ENCODE measurements at regions of chr6 and their contacts with region 1.

Region 1: GRCh38 chr6:80004173-80005072 is at the start of gene TTK:
- DNase-seq: peak; percentile 90
- H3K4me3 ChIP-seq: peak within 1 kb of the TSS; percentile 97 to 98 (median 97)
- H3K27ac ChIP-seq: peak within 1 kb of the TSS; percentile 66
- H3K4me1 ChIP-seq: peaks cover 9% of the 10 kb centered on the region
- H3K27me3 ChIP-seq: no peaks in the 10 kb centered on the region
- CTCF ChIP-seq: no peak
- POLR2A ChIP-seq: peak; percentile 69
- total RNA-seq, gene TTK: 23.6 and 29.4 TPM in 2 replicates

Region 2: DNA sequence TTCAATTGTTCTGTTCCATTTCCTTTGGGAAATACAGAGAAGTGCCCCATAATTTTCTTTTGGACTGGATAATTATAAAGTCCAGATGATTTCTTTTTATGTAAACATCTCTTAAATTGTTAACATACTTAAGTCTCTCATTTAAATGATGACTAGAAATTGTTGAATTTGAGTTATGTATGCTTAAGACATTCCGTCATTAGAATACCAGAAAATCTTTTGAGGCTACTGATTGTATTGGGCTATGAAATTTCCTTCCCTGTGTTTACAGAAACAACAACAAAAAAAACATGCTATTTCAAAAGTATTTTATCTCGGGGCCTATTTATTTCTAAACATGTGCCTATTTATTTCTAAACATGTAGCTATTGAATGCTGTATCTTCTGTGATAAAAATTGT is 247.9 kb before region 1 on chr6:
- CTCF ChIA-PET with region 1: no interaction called
- POLR2A ChIA-PET with region 1: no interaction called
- dilution Hi-C with region 1: no loop called
- intact Hi-C with region 1: loop called (anchors 5 kb)
- DNase-seq: peak; percentile 43
- H3K4me3 ChIP-seq: no peak overlapping the region
- H3K27ac ChIP-seq: peak overlapping the region; percentile 30
- H3K4me1 ChIP-seq: peaks cover 26% of the 10 kb centered on the region
- H3K27me3 ChIP-seq: no peaks in the 10 kb centered on the region
- CTCF ChIP-seq: no peak
- POLR2A ChIP-seq: no peak

Region 3: DNA sequence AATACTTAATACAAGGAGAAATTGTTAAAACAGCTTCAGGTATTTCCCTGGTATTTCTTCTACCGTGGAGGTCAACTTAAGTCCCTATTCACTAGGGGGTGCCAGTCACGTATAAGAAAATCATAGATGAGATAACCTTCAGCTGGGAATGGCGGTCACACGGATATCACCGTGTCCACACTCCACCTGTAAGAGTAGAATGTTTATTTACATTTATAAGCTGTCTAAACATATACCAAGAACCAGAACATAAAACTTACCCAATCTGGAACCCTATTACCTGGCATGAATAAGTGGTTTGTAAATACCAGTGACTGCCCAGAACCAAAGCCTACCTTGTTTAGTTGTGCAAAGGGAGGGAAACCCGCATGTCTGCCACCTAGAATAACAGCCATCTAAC is 55.2 kb before region 1 on chr6:
- CTCF ChIA-PET with region 1: interaction called, 12 read pairs
- POLR2A ChIA-PET with region 1: interaction called, 3 read pairs
- dilution Hi-C with region 1: no loop called
- intact Hi-C with region 1: loop called (anchors 1 kb)
- DNase-seq: peak; percentile 53
- H3K4me3 ChIP-seq: no peak overlapping the region
- H3K27ac ChIP-seq: no peak overlapping the region
- H3K4me1 ChIP-seq: peaks cover 13% of the 10 kb centered on the region
- H3K27me3 ChIP-seq: peaks cover 8 to 31% of the 10 kb centered on the region in 2 experiments
- CTCF ChIP-seq: peak; percentile 41 to 49
- POLR2A ChIP-seq: no peak

Region 4: GRCh38 chr6:79981652-79982051 is 22.8 kb before region 1 on chr6:
- CTCF ChIA-PET with region 1: no interaction called
- POLR2A ChIA-PET with region 1: no interaction called
- dilution Hi-C with region 1: no loop called
- intact Hi-C with region 1: no loop called
- DNase-seq: no peak
- H3K4me3 ChIP-seq: no peak overlapping the region
- H3K27ac ChIP-seq: no peak overlapping the region
- H3K4me1 ChIP-seq: no peaks in the 10 kb centered on the region
- H3K27me3 ChIP-seq: peaks cover 4 to 9% of the 10 kb centered on the region in 2 experiments
- CTCF ChIP-seq: no peak
- POLR2A ChIP-seq: no peak

Region 5: GRCh38 chr6:80022803-80023202 is 18.4 kb after region 1 on chr6:
- CTCF ChIA-PET with region 1: interaction called, 4 read pairs
- POLR2A ChIA-PET with region 1: interaction called, 3 read pairs
- dilution Hi-C with region 1: no loop called
- intact Hi-C with region 1: loop called (anchors 2 kb)
- DNase-seq: peak; percentile 65
- H3K4me3 ChIP-seq: no peak overlapping the region
- H3K27ac ChIP-seq: peak overlapping the region; percentile 74
- H3K4me1 ChIP-seq: peaks cover 11% of the 10 kb centered on the region
- H3K27me3 ChIP-seq: no peaks in the 10 kb centered on the region
- CTCF ChIP-seq: no peak
- POLR2A ChIP-seq: no peak

Region 6: DNA sequence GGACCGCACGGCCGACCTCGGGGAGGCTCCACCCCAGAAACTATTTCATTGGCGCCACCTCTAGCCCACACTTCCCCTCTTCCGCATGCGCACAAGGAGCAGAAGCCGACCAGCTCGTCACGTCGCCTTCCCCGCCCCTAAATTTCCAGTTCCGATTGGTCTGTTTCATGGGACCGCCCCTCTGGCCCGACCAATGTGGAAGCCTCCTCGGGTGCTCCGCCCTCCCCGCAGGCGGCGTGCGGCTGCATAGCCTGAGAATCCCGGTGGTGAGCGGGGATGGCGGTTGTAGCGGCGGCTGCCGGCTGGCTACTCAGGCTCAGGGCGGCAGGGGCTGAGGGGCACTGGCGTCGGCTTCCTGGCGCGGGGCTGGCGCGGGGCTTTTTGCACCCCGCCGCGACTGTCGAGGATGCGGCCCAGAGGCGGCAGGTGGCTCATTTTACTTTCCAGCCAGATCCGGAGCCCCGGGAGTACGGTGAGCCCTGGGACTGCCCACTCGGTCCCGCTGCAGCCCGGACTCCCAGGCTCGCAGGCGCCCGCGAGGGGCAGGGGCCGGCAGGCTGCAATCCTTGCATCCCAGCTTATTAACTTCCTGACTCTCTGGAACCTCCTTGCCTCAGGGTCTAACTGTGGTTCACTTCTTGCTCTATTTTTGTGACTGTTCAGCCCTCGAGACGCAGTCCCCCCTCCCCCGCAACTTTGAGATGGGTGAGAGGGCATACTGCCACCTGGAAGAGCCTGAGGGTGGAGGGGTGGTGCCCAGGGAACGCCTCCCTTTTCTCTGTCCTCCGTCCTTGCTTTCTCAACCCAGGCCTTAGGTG is 102.2 kb after region 1 on chr6 and contains the start of gene BCKDHB:
- CTCF ChIA-PET with region 1: no interaction called
- POLR2A ChIA-PET with region 1: no interaction called
- dilution Hi-C with region 1: no loop called
- intact Hi-C with region 1: loop called (anchors 5 kb)
- DNase-seq: peak; percentile 99
- H3K4me3 ChIP-seq: peak within 1 kb of the TSS; percentile 63 to 90 (median 66)
- H3K27ac ChIP-seq: peak within 1 kb of the TSS; percentile 13
- H3K4me1 ChIP-seq: peaks cover 3% of the 10 kb centered on the region
- H3K27me3 ChIP-seq: peaks cover 0 to 4% of the 10 kb centered on the region in 2 experiments
- CTCF ChIP-seq: no peak
- POLR2A ChIP-seq: peak; percentile 96
- total RNA-seq, gene BCKDHB: 11.5 and 12.2 TPM in 2 replicates

Measured in endothelial cell of umbilical vein (primary cell).